ENCODE measurements at regions of chr15 and their contacts with region 1.

Region 1: DNA sequence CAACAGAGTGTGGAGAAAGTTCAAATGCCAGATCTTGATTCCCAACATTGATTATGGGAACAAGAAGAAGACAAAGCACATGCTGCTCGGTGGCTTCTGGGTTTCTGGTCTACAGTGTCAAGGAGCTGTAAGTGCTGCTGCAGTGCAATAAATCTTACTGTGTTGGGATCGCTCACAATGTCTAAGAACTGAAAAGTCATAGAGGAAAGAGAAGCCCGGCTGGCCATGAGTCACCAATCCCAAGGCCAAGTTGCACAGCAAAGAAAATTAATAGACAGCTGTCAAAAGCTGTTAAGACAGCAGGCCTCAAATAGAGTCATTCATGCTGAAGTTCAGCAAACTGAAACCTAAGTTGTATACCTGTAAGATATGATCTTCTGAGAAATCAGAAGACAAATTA is 33.2 kb upstream of the SPPL2A start:
- DNase-seq: peak; percentile 23 to 84
- ATAC-seq: peak; percentile 93 to 97 (median 96)
- H3K4me3 ChIP-seq: no peak overlapping the region
- H3K27ac ChIP-seq: peak overlapping the region; percentile 89
- H3K4me1 ChIP-seq: peaks cover 19% of the 10 kb centered on the region
- H3K27me3 ChIP-seq: no peaks in the 10 kb centered on the region
- CTCF ChIP-seq: no peak

Region 2: DNA sequence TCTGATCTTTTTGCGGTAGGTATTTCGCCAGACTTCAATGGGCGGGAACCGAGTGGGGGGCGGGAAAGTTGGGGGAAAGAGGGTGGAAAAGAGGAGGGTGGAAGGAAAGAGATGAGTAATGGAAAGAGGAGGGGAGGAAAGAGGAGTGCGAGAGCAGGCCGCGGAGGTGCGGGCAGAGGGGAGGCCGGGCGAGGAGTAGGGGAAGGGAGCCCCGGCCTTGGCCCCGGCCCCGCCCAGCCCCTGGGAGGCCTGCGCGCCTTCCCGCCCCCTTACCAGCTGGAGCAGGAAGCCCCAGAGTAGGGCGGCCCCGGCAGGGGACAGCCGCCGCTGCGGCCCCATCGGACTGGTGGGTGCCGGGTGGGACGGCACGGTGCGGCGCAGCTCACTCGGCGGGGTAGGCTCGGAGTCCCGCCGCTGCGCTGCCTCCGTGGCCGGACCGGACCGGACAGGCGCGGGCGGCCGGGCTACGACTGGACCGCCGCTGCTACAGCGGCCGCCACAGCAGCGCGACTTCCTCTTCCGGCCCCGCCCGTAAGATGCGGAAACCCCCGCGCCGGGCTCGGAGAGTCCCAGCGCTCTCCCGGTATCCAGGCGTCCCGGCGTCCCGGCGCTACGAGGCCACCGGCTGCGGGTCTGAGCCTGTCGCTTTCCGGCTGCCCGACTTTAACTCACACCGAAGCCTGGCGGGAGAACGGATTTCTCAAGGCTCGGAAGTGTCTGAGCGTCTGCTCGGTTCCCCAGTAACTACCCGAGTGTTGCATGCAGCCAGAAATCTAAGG is 33.3 kb before region 1 on chr15 and contains the start of gene SPPL2A:
- intact Hi-C with region 1: loop called in 1 of 2 experiments (anchors 2 kb)
- DNase-seq: peak; percentile 90 to 93
- ATAC-seq: peak; percentile 58 to 75 (median 66)
- H3K4me3 ChIP-seq: peak within 1 kb of the TSS; percentile 90
- H3K27ac ChIP-seq: peak within 1 kb of the TSS; percentile 99
- H3K4me1 ChIP-seq: peaks cover 28% of the 10 kb centered on the region
- H3K27me3 ChIP-seq: no peaks in the 10 kb centered on the region
- CTCF ChIP-seq: no peak
- total RNA-seq, gene SPPL2A: 124 to 303 (median 255) TPM

Region 3: DNA sequence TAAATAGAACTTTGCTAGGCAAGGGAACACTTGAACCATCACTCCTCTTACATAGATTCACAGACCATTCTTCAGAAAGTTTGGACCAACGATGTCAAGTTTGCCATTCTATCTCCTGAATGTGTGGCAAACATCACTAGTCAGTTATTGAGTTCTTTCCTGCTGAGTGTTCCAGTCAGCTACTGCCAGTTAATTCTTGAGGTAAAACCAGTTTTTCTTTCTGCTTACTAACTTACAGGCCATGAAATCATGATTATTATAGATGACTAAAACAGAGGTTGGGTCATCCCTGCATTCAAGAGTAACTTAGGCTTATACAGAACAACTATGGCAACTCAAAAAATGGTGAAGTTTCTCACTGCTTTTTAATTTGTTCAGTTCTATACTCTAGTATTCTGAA is 198.0 kb after region 1 on chr15:
- intact Hi-C with region 1: no loop called
- DNase-seq: no peak
- ATAC-seq: no peak
- H3K4me3 ChIP-seq: no peak overlapping the region
- H3K27ac ChIP-seq: no peak overlapping the region
- H3K4me1 ChIP-seq: no peaks in the 10 kb centered on the region
- H3K27me3 ChIP-seq: no peaks in the 10 kb centered on the region
- CTCF ChIP-seq: no peak